Psoas muscle (tissue), 8 donors: ENCODE measurements at regions of chr2 and their contacts with region 1.

Region 1: GRCh38 chr2:44361330-44362206 is at the starts of genes CAMKMT and PREPL:
- DNase-seq: peak; percentile 98 to 99
- ATAC-seq: peak; percentile 93 to 96 (median 94)
- H3K4me3 ChIP-seq: peak within 1 kb of the TSS; percentile 83
- H3K27ac ChIP-seq: peak within 1 kb of the TSS; percentile 92
- H3K4me1 ChIP-seq: peaks cover 29% of the 10 kb centered on the region
- H3K27me3 ChIP-seq: no peaks in the 10 kb centered on the region
- CTCF ChIP-seq: no peak
- total RNA-seq, gene CAMKMT: 4.5 to 7.3 (median 5.5) TPM
- total RNA-seq, gene PREPL: 44.1 to 66.2 (median 50.0) TPM

Region 2: GRCh38 chr2:44075541-44075940 is 286.0 kb before region 1 on chr2:
- intact Hi-C with region 1: loop called in 1 of 2 experiments (anchors 5 kb)
- DNase-seq: peak; percentile 70 to 87
- ATAC-seq: peak; percentile 96 to 99 (median 98)
- H3K4me3 ChIP-seq: no peak overlapping the region
- H3K27ac ChIP-seq: peak overlapping the region; percentile 91
- H3K4me1 ChIP-seq: peaks cover 16% of the 10 kb centered on the region
- H3K27me3 ChIP-seq: no peaks in the 10 kb centered on the region
- CTCF ChIP-seq: no peak

Region 3: GRCh38 chr2:44191739-44192138 is 169.8 kb before region 1 on chr2:
- intact Hi-C with region 1: no loop called
- DNase-seq: no peak
- ATAC-seq: no peak
- H3K4me3 ChIP-seq: no peak overlapping the region
- H3K27ac ChIP-seq: no peak overlapping the region
- H3K4me1 ChIP-seq: peaks cover 29% of the 10 kb centered on the region
- H3K27me3 ChIP-seq: no peaks in the 10 kb centered on the region
- CTCF ChIP-seq: no peak

Region 4: GRCh38 chr2:44296653-44297052 is 64.9 kb before region 1 on chr2:
- intact Hi-C with region 1: no loop called
- DNase-seq: no peak
- ATAC-seq: no peak
- H3K4me3 ChIP-seq: no peak overlapping the region
- H3K27ac ChIP-seq: no peak overlapping the region
- H3K4me1 ChIP-seq: peaks cover 6% of the 10 kb centered on the region
- H3K27me3 ChIP-seq: no peaks in the 10 kb centered on the region
- CTCF ChIP-seq: no peak

Region 5: DNA sequence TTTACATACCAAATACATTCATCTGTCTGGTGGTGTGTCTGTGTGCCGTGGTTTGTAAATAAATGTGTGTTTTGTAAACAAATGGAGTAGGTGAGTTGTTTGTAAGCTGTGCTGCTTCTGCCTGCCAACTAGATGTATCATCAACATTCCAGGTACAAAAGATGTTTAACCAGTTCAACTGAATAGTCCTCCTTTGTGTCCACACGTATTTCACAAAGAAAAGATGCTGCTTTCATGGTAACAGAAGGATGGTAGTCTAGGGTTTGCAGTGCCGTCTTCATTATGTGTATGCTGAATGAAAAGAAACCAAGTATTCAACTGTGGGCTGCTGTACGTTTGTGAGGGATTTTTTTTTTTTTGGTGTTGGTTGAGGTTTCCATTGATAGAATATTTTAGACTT is 72.3 kb after region 1 on chr2:
- intact Hi-C with region 1: no loop called
- DNase-seq: no peak
- ATAC-seq: no peak
- H3K4me3 ChIP-seq: no peak overlapping the region
- H3K27ac ChIP-seq: no peak overlapping the region
- H3K4me1 ChIP-seq: peaks cover 5% of the 10 kb centered on the region
- H3K27me3 ChIP-seq: no peaks in the 10 kb centered on the region
- CTCF ChIP-seq: no peak